Activated CD4-positive, alpha-beta memory T cell treated with anti-CD3 and anti-CD28 coated beads for 36 hours (primary cell): ENCODE measurements at regions of chr16 and their contacts with region 1.

Region 1: DNA sequence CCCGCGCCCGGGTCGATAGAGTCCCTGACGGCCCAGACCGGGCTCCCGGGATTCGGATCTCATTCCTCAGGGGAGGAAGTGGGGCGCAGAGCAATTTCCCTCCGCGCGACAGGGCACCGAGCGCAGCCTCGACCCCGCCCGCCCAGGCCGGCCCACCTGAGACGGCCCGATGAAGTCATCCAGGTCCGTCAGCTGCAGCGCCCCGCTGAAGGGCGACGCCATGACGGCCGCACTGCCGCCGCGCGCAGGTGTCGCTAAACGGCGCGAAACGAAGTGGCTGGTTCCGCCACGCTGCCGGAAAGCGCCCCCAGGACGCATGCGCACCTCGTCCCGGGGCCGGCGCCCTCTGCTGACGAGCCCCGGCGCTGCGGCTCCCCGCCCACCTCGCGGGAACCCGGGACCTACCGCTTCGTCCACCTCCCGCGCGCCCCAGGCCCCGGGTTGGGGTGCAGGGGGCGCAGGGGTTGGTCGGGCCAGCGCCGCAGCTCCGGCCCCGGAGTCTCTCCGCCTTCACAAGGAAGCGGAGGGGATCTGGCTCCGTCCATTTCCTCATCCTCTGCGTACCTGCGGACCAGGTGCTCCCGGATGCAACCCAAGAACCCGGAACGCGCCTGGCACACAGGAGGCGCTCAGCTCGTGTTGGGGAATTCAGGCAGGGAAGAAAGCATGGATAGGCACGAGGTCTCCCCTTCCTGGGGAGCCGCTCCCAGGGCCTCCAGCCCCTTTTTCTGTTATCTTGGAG is at the start of gene CIAO3:
- DNase-seq: peak; percentile 95
- H3K4me3 Mint-ChIP-seq: peak within 1 kb of the TSS; percentile 82
- H3K27ac Mint-ChIP-seq: no peak within 1 kb of the TSS
- H3K4me1 Mint-ChIP-seq: peaks cover 23% of the 10 kb centered on the region
- H3K27me3 Mint-ChIP-seq: no peaks in the 10 kb centered on the region
- total RNA-seq, gene CIAO3: 31.8 to 32.2 TPM

Region 2: DNA sequence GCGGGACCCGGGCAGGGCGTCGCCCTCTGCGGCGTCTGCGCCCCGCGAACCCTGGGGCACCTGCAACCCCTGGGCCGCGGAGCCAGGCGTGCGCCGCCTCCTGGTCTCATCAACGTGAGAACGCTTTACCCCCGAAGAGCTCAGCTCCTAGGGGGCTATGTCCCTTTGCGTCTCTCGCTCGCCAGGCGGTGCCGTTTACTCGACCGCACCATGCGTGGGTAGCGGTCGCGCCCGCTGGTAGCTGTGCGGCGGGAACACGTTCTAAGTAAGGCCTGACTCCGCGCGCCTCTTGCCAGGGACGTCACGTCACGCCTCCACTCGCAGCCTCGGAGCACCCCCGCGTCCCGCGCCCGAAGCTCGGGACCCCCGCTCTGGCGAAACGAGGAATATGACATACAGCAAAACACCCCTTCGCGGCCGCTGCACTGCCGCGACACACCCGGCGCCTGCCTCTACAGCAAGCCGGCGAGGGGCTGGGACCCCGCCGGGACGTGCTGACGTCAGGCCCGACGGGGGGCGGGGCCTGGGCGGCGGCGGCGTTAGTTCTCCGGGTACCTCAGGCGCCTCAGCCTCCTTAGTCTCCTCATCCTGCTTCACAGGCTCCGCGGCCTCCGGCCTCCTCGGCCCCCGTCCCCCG is 315.7 kb before region 1 on chr16 and contains the start of gene RAB11FIP3:
- CTCF ChIA-PET with region 1: no interaction called
- POLR2A ChIA-PET with region 1: no interaction called
- intact Hi-C with region 1: no loop called
- DNase-seq: peak; percentile 87
- H3K4me3 Mint-ChIP-seq: peak within 1 kb of the TSS; percentile 82
- H3K27ac Mint-ChIP-seq: no peak within 1 kb of the TSS
- H3K4me1 Mint-ChIP-seq: peaks cover 31% of the 10 kb centered on the region
- H3K27me3 Mint-ChIP-seq: no peaks in the 10 kb centered on the region
- total RNA-seq, gene RAB11FIP3: 14.8 to 18.4 TPM

Region 3: GRCh38 chr16:720990-721764 is 19.8 kb before region 1 on chr16 and contains the start of gene ANTKMT:
- CTCF ChIA-PET with region 1: interaction called, 21 read pairs
- POLR2A ChIA-PET with region 1: interaction called, 14 read pairs
- intact Hi-C with region 1: loop called (anchors 1 kb)
- DNase-seq: peak; percentile 84
- H3K4me3 Mint-ChIP-seq: peak within 1 kb of the TSS; percentile 72
- H3K27ac Mint-ChIP-seq: peak within 1 kb of the TSS; percentile 55
- H3K4me1 Mint-ChIP-seq: peaks cover 17% of the 10 kb centered on the region
- H3K27me3 Mint-ChIP-seq: peaks cover 4% of the 10 kb centered on the region
- total RNA-seq, gene ANTKMT: 31.2 to 34.9 TPM

Region 4: GRCh38 chr16:777826-778225 is 36.9 kb after region 1 on chr16:
- CTCF ChIA-PET with region 1: no interaction called
- POLR2A ChIA-PET with region 1: no interaction called
- intact Hi-C with region 1: no loop called
- DNase-seq: no peak
- H3K4me3 Mint-ChIP-seq: no peak overlapping the region
- H3K27ac Mint-ChIP-seq: no peak overlapping the region
- H3K4me1 Mint-ChIP-seq: no peaks in the 10 kb centered on the region
- H3K27me3 Mint-ChIP-seq: peaks cover 6% of the 10 kb centered on the region